A549 (cell line): ENCODE measurements at regions of chr16 and their contacts with region 1.

Region 1: GRCh38 chr16:72832621-72833248 is 215.2 kb downstream of the ZFHX3 start:
- DNase-seq: peak; percentile 71 to 73
- ATAC-seq: peak; percentile 89 to 94
- H3K4me3 ChIP-seq: no peak overlapping the region
- H3K27ac ChIP-seq: peak overlapping the region; percentile 19 to 38; a peak in 4 of 6 replicates
- H3K4me1 ChIP-seq: peaks cover 29% of the 10 kb centered on the region
- CTCF ChIP-seq: peak; percentile 92
- EP300 ChIP-seq: no peak
- POLR2A ChIP-seq: no peak
- RAD21 ChIP-seq: peak; percentile 91 to 95

Region 2: GRCh38 chr16:72807245-72807644 is 25.5 kb before region 1 on chr16:
- CTCF ChIA-PET with region 1: interaction called, 10 read pairs
- POLR2A ChIA-PET with region 1: no interaction called
- DNase-seq: no peak
- ATAC-seq: no peak
- H3K4me3 ChIP-seq: no peak overlapping the region
- H3K27ac ChIP-seq: no peak overlapping the region
- H3K4me1 ChIP-seq: peaks cover 6% of the 10 kb centered on the region; the same call in 2 of the 3 replicates
- CTCF ChIP-seq: no peak
- EP300 ChIP-seq: no peak
- POLR2A ChIP-seq: no peak
- RAD21 ChIP-seq: no peak

Region 3: GRCh38 chr16:72847187-72848027 is 14.7 kb after region 1 on chr16:
- CTCF ChIA-PET with region 1: interaction called, 90 read pairs
- POLR2A ChIA-PET with region 1: no interaction called
- DNase-seq: peak; percentile 63 to 76
- ATAC-seq: peak; percentile 71 to 80
- H3K4me3 ChIP-seq: peak overlapping the region; percentile 48
- H3K27ac ChIP-seq: peak overlapping the region; percentile 97 to 100
- H3K4me1 ChIP-seq: peaks cover 51% of the 10 kb centered on the region
- CTCF ChIP-seq: peak; percentile 68
- EP300 ChIP-seq: no peak
- POLR2A ChIP-seq: no peak
- RAD21 ChIP-seq: peak; percentile 57 to 65

Region 4: GRCh38 chr16:72894293-72895151 is 61.8 kb after region 1 on chr16:
- CTCF ChIA-PET with region 1: interaction called, 10 read pairs
- POLR2A ChIA-PET with region 1: no interaction called
- DNase-seq: no peak
- ATAC-seq: no peak
- H3K4me3 ChIP-seq: no peak overlapping the region
- H3K27ac ChIP-seq: no peak overlapping the region
- H3K4me1 ChIP-seq: no peaks in the 10 kb centered on the region
- CTCF ChIP-seq: no peak
- EP300 ChIP-seq: no peak
- POLR2A ChIP-seq: no peak
- RAD21 ChIP-seq: no peak

Region 5: DNA sequence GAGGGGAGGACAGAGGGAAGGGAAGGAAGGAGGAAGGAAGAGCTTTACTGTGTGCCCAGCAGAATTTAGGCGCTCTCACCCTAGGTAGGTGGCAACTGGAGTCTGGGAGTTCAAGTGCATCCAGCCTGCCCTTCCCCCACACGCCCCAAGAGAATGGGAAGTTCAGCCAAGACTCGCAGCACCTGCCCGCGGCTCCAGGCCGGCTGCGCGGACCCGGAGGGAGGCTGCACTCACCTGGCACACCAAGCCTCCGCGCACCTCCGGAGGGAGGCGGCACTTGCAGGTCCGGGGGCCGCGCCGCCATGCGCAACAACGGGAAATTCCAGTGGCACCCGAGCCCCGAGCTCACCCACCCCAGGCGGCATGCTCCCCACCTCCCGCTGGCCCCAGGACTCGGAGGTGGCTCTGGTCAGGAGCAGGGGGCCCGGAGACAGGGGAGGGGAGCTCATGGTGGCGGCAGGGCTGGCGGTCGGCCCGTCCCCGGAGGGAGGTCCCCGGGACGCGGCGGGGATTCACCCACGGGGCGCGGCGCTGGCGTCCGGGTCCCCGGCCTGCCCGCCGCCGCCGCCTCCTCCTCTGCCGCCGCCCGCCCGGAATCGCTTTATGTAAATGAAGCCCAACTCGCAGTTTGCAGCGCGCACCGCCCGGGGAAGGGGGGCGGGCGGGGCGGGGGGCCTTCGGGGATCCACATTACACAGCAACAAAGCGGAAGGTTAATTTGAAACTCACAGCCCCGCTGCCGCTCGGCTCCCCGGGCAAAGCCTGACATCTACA is 215.0 kb after region 1 on chr16 and contains the start of gene ZFHX3:
- CTCF ChIA-PET with region 1: interaction called, 10 read pairs
- POLR2A ChIA-PET with region 1: no interaction called
- DNase-seq: peak in 1 of 2 experiments; percentile 73
- ATAC-seq: peak; percentile 67 to 69
- H3K4me3 ChIP-seq: peak within 1 kb of the TSS; percentile 72
- H3K27ac ChIP-seq: peak within 1 kb of the TSS; percentile 99
- H3K4me1 ChIP-seq: peaks cover 85% of the 10 kb centered on the region
- CTCF ChIP-seq: peak; percentile 25; the same call in 1 of the 3 replicates
- EP300 ChIP-seq: no peak
- POLR2A ChIP-seq: no peak
- RAD21 ChIP-seq: peak; percentile 31 to 62; a peak in 2 of 5 replicates
- polyA plus RNA-seq, gene ZFHX3: 6.5 and 11.0 TPM in 2 replicates